ENCODE measurements at regions of chr11 and their contacts with region 1.

Region 1: DNA sequence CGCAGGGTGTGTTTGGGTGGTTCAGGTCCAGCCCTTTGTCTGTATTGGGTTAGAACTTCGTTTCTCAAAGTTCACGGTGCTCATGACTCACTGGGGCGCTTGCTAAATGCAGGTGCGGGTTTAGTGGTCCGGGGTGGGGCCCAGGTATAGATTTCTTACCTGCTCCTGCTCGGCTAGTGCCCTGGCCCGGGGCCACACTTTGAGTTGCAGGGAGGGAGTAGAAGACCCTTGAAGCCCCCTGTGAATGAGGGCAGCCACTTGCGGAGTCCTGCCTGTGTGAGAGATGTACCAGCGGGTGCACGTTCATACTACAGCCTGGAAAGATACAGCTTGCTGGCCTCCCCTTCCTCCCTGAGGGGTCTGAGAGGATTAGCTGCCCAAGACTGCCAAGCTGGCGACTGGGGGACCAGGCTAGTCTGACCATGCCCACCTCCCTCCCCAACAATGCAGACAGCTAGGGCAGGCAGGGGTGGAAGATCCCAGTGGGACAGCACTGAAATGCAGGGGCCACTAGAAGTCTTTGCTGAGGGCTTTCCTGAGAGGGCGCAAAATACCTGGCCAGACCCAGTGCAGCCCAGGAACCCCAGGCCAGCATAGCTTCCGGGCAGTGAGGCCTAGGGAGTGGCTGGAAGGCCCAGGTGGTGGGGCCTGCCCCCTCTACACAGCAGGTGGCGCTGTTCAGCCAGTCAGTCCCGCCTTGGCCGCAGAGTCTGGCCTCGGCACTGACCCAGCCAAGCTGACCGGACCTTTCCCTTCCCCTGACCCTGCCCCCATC is 5.1 kb upstream of the MYRF start:
- DNase-seq: peak; percentile 88
- ATAC-seq: peak; percentile 81
- H3K4me3 Mint-ChIP-seq: no peak overlapping the region
- H3K27ac Mint-ChIP-seq: no peak overlapping the region
- H3K4me1 Mint-ChIP-seq: peaks cover 10% of the 10 kb centered on the region
- H3K27me3 Mint-ChIP-seq: peaks cover 20% of the 10 kb centered on the region
- CTCF ChIP-seq: peak; percentile 85

Region 2: GRCh38 chr11:61671527-61671926 is 75.9 kb before region 1 on chr11:
- CTCF ChIA-PET with region 1: interaction called, 11 read pairs
- POLR2A ChIA-PET with region 1: no interaction called
- DNase-seq: peak; percentile 61
- ATAC-seq: peak; percentile 91
- H3K4me3 Mint-ChIP-seq: no peak overlapping the region
- H3K27ac Mint-ChIP-seq: no peak overlapping the region
- H3K4me1 Mint-ChIP-seq: peaks cover 14% of the 10 kb centered on the region
- H3K27me3 Mint-ChIP-seq: no peaks in the 10 kb centered on the region; the same call in 1 of the 2 replicates
- CTCF ChIP-seq: no peak

Region 3: DNA sequence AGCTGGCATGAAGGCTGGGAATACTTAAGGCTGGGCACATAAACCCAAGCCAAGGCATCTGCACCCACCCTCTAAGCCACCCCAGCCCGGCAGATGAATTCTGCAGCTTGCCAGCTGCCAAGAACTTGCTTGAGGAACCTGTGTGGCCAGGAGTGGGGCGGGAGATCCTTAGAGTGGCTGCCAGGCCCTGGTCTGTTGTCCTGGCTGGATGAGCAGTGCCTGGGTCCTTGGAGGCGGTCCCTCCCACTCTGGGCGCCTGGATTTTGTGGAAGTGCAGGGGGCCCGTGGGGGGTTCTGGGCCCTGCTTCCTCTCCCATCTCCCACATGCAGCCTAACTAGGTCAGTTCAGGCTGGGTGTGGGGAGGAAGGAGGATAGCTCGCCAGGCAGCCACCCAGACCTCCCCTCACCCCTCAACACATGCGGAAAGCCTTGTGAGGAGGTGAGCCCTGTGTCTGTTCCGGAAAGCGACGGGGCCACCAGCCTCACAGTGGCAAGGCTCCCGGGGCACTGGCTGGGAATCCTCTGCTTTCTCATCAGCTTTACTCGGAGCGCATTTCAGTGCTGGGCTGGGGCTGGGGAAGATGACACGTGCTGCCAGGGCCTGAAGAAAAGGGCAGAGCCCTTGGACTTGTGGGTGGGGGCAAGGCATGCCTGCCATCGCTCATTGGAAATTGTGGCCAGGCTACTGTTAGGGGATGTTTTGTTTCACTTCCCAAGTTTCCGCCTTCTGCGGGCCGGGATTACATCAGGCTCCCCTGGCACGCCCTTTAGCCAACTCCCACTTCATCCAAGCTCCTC is 58.8 kb before region 1 on chr11:
- CTCF ChIA-PET with region 1: interaction called, 17 read pairs
- POLR2A ChIA-PET with region 1: no interaction called
- DNase-seq: no peak
- ATAC-seq: no peak
- H3K4me3 Mint-ChIP-seq: no peak overlapping the region
- H3K27ac Mint-ChIP-seq: no peak overlapping the region
- H3K4me1 Mint-ChIP-seq: peaks cover 21% of the 10 kb centered on the region
- H3K27me3 Mint-ChIP-seq: no peaks in the 10 kb centered on the region
- CTCF ChIP-seq: no peak

Region 4: DNA sequence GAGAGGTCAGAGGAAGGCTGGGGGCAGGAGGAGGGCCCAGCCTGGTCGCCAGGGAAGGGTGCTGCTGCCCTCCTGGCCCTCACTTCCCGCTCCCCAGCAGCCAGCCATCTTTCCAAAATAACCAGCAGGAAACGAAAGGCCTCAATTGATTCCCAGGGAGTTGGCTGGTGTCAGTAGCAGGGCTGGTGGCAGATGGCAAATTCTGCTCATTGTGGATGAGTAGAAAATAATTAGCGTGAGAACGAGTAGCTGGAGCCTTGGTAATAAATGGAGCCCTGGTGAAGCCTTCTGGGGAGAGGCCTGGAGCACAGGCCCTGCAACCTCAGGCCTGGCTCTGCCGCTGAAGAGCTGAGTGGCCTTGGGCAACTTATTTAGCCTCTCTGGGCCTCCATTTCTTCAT is 35.9 kb before region 1 on chr11:
- CTCF ChIA-PET with region 1: interaction called, 14 read pairs
- POLR2A ChIA-PET with region 1: no interaction called
- DNase-seq: no peak
- ATAC-seq: no peak
- H3K4me3 Mint-ChIP-seq: no peak overlapping the region
- H3K27ac Mint-ChIP-seq: no peak overlapping the region
- H3K4me1 Mint-ChIP-seq: peaks cover 20% of the 10 kb centered on the region
- H3K27me3 Mint-ChIP-seq: peaks cover 3% of the 10 kb centered on the region; the same call in 1 of the 2 replicates
- CTCF ChIP-seq: no peak

Region 5: GRCh38 chr11:61769169-61769920 is 22.0 kb after region 1 on chr11:
- CTCF ChIA-PET with region 1: interaction called, 106 read pairs
- POLR2A ChIA-PET with region 1: no interaction called
- DNase-seq: peak; percentile 44
- ATAC-seq: peak; percentile 29
- H3K4me3 Mint-ChIP-seq: no peak overlapping the region
- H3K27ac Mint-ChIP-seq: no peak overlapping the region
- H3K4me1 Mint-ChIP-seq: peaks cover 12% of the 10 kb centered on the region
- H3K27me3 Mint-ChIP-seq: no peaks in the 10 kb centered on the region
- CTCF ChIP-seq: 0 out of 2 replicates have a peak, but pooled peaks have one; percentile 16

Region 6: DNA sequence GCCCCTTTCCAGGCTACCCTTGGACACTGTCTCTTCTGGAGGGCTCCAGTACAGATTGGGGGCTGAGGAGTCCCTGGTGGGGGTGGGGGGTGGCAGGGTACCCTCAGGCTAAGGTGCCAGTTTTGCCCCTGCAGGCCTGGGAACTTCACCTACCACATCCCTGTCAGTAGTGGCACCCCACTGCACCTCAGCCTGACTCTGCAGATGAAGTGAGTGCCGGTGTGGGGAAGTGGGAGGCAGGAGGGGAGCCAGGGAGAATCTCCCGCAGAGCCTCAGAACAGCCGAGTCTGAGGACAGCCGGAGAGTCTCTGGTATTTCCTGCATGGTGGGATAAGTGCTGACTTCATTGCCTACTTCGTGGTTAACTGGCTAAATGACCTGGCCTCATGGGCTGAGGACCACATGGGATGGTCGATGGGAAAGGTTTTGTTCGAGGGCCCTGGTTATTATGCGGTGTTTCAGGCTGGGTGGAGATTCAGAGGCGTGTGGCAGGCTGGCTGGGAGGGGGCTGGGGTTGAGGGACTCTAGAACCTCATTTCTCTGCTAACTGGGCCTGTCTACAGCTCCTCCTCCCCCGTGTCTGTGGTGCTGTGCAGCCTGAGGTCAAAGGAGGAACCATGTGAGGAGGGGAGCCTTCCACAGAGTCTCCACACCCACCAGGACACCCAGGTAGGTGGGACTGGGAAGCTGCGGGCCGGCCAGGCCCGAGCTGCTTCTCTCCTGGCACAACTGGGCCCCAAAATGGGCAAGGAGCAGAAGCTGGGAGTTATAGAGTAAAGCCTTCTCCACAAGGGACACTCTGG is 36.5 kb after region 1 on chr11:
- CTCF ChIA-PET with region 1: interaction called, 175 read pairs
- POLR2A ChIA-PET with region 1: no interaction called
- DNase-seq: no peak
- ATAC-seq: no peak
- H3K4me3 Mint-ChIP-seq: no peak overlapping the region
- H3K27ac Mint-ChIP-seq: peak overlapping the region; percentile 9; the same call in 1 of the 2 replicates
- H3K4me1 Mint-ChIP-seq: no peaks in the 10 kb centered on the region
- H3K27me3 Mint-ChIP-seq: no peaks in the 10 kb centered on the region; the same call in 1 of the 2 replicates
- CTCF ChIP-seq: no peak

Region 7: DNA sequence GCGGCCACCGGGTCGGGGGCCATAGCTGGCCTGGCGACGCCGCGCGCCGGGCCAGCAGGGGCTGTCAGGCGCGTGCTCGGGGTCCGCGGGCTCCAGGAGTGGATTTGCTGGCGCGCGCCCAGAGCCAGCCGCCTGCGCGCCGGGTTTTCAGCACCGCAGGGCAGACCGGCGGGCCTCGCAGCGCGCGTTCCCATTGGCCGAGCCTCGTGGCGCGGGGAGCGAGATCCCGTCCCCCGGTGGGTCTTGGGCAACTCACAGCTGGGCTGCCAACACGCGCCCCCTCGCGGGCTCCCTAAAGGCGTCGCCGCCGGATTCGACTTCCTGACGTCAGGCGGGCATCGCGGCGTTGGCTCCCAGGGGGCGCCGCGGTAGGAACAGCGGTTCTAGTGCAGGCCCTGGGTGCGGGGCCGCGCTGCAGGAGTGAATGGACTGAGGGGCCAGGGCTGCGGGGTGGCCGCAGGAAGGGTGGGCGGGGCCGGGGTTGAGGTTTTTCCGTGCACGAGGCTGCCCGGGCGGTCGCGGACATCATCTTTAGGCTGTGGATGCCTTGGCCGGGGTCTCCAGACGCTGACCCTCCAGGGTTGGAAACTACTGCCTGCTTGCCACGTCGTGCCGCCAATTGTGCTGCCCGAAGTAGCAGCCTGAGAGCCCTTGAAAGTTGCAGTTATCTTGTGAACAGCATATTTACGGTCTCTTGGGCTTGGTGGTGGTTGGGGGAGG is 69.5 kb after region 1 on chr11 and contains the start of gene FADS1:
- CTCF ChIA-PET with region 1: interaction called, 10 read pairs
- POLR2A ChIA-PET with region 1: interaction called, 3 read pairs
- DNase-seq: peak; percentile 90
- ATAC-seq: peak; percentile 32
- H3K4me3 Mint-ChIP-seq: peak within 1 kb of the TSS; percentile 94
- H3K27ac Mint-ChIP-seq: peak within 1 kb of the TSS; percentile 99
- H3K4me1 Mint-ChIP-seq: peaks cover 23% of the 10 kb centered on the region
- H3K27me3 Mint-ChIP-seq: no peaks in the 10 kb centered on the region; the same call in 1 of the 2 replicates
- CTCF ChIP-seq: no peak
- total RNA-seq, gene FADS1: 105 to 108 TPM (median 105 TPM) in 3 replicates